ENCODE measurements at regions of chr6 and their contacts with region 1.

Region 1: GRCh38 chr6:24855395-24856245 is 56.9 kb upstream of the ARMH2 start:
- DNase-seq: peak in 5 of 6 donors; percentile 42 to 67 (median 50)
- ATAC-seq: peak; percentile 88 to 97 (median 94)
- H3K4me3 ChIP-seq: peak overlapping the region in 2 of 4 donors; percentile 7 to 19
- H3K27ac ChIP-seq: no peak overlapping the region
- H3K4me1 ChIP-seq: peaks cover 0 to 3% (median 0%) of the 10 kb centered on the region in 3 donors
- H3K27me3 ChIP-seq: no peaks in the 10 kb centered on the region
- CTCF ChIP-seq: peak; percentile 29 to 81 (median 65)

Region 2: GRCh38 chr6:24991810-24992467 is 136.3 kb after region 1 on chr6:
- intact Hi-C with region 1: loop called in 1 of 3 experiments (anchors 10 kb)
- DNase-seq: peak in 5 of 6 donors; percentile 28 to 59 (median 37)
- ATAC-seq: peak; percentile 72 to 97 (median 92)
- H3K4me3 ChIP-seq: no peak overlapping the region
- H3K27ac ChIP-seq: no peak overlapping the region
- H3K4me1 ChIP-seq: no peaks in the 10 kb centered on the region
- H3K27me3 ChIP-seq: no peaks in the 10 kb centered on the region
- CTCF ChIP-seq: peak; percentile 50 to 75 (median 64)

Region 3: GRCh38 chr6:25017932-25018567 is 162.4 kb after region 1 on chr6:
- intact Hi-C with region 1: loop called in 1 of 3 experiments (anchors 10 kb)
- DNase-seq: peak in 2 of 6 donors; percentile 36 to 52
- ATAC-seq: peak; percentile 71 to 87 (median 81)
- H3K4me3 ChIP-seq: no peak overlapping the region
- H3K27ac ChIP-seq: no peak overlapping the region
- H3K4me1 ChIP-seq: no peaks in the 10 kb centered on the region
- H3K27me3 ChIP-seq: peaks cover 0 to 4% (median 0%) of the 10 kb centered on the region in 4 donors
- CTCF ChIP-seq: peak in 1 of 4 donors; percentile 29

Region 4: DNA sequence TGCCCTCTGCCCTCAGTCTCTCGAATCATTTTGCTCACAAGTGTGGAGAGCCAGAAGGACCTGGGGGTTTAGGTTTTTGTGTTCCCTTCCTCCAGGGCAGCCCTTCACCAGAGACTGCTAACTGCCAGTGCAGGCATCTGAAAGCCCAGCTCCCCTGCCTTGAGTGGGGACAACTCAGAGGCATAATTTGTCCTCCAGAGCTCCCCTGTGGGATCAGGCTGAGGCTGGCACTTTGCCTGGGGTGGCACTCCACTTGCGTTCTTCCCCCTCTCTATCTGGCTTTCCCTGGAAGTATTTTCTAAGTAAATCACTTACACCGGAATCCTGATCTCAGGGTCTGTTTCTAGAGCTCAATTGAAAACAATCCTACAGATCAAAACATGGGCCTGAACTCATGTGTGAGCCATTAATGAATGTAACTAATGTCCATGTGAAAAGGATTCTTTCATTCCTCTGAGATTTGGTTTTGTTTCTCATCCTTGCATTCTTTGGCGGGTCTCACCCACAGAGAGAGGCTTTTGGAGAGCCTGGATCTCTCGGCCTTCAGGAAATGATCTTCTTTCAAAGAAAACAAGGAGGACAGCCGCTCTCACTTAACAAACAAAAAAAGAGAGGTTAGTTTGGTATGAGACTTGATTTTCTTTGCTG is 205.8 kb after region 1 on chr6:
- intact Hi-C with region 1: loop called in 2 of 3 experiments (anchors 5 to 10 kb)
- DNase-seq: no peak
- ATAC-seq: no peak
- H3K4me3 ChIP-seq: no peak overlapping the region
- H3K27ac ChIP-seq: no peak overlapping the region
- H3K4me1 ChIP-seq: no peaks in the 10 kb centered on the region
- H3K27me3 ChIP-seq: no peaks in the 10 kb centered on the region
- CTCF ChIP-seq: no peak

Region 5: GRCh38 chr6:25066593-25066992 is 211.0 kb after region 1 on chr6:
- intact Hi-C with region 1: loop called in 2 of 3 experiments (anchors 5 to 10 kb)
- DNase-seq: no peak
- ATAC-seq: no peak
- H3K4me3 ChIP-seq: no peak overlapping the region
- H3K27ac ChIP-seq: no peak overlapping the region
- H3K4me1 ChIP-seq: no peaks in the 10 kb centered on the region
- H3K27me3 ChIP-seq: no peaks in the 10 kb centered on the region
- CTCF ChIP-seq: no peak